ENCODE measurements at regions of chr14 and their contacts with region 1.

Region 1: GRCh38 chr14:77040059-77040740 is 11.7 kb upstream of the IRF2BPL start:
- DNase-seq: peak; percentile 97 to 99 (median 97)
- H3K4me3 ChIP-seq: peak overlapping the region; percentile 31 to 67 (median 38)
- H3K4me3 Mint-ChIP-seq: peak overlapping the region; percentile 73 to 86
- H3K27ac ChIP-seq: peak overlapping the region; percentile 93 to 95
- H3K27ac Mint-ChIP-seq: peak overlapping the region; percentile 94 to 99 (median 99)
- H3K4me1 ChIP-seq: peaks cover 87 to 92% of the 10 kb centered on the region in 2 donors
- H3K4me1 Mint-ChIP-seq: peaks cover 91% of the 10 kb centered on the region
- H3K27me3 ChIP-seq: no peaks in the 10 kb centered on the region
- H3K27me3 Mint-ChIP-seq: peaks cover 0 to 7% (median 0%) of the 10 kb centered on the region in 3 donors
- CTCF ChIP-seq: no peak

Region 2: DNA sequence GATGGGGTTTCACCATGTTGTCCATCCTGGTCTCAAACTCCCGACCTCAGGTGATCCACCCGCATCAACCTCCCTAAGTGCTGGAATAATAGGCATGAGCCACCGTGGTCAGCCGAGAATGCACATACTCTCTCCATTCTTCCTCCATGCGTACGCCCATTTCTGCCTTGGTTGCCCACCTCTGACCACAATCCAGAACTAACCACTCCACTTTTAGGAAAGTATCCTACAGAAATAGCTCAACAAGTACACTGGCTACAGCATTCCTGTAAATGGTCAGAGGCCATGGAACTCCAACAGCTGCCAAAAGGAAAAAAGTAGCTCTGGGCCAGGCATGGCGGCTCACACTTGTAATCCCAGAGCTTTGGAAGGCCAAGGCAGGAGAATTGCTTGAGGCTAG is 72.4 kb before region 1 on chr14:
- intact Hi-C with region 1: no loop called
- DNase-seq: no peak
- H3K4me3 ChIP-seq: no peak overlapping the region
- H3K4me3 Mint-ChIP-seq: no peak overlapping the region
- H3K27ac ChIP-seq: no peak overlapping the region
- H3K27ac Mint-ChIP-seq: peak overlapping the region in 1 of 7 donors; percentile 87
- H3K4me1 ChIP-seq: peaks cover 0 to 1% of the 10 kb centered on the region in 2 donors
- H3K4me1 Mint-ChIP-seq: peaks cover 6% of the 10 kb centered on the region
- H3K27me3 ChIP-seq: no peaks in the 10 kb centered on the region
- H3K27me3 Mint-ChIP-seq: peaks cover 0 to 12% (median 2%) of the 10 kb centered on the region in 3 donors
- CTCF ChIP-seq: no peak

Region 3: GRCh38 chr14:76977793-76978720 is 62.1 kb before region 1 on chr14:
- intact Hi-C with region 1: loop called in 1 of 2 experiments (anchors 5 kb)
- DNase-seq: peak; percentile 98 to 100 (median 100)
- H3K4me3 ChIP-seq: no peak overlapping the region
- H3K4me3 Mint-ChIP-seq: peak overlapping the region; percentile 34 to 73
- H3K27ac ChIP-seq: peak overlapping the region; percentile 75 to 91
- H3K27ac Mint-ChIP-seq: peak overlapping the region; percentile 93 to 97 (median 96)
- H3K4me1 ChIP-seq: peaks cover 17 to 20% of the 10 kb centered on the region in 2 donors
- H3K4me1 Mint-ChIP-seq: peaks cover 19% of the 10 kb centered on the region
- H3K27me3 ChIP-seq: no peaks in the 10 kb centered on the region
- H3K27me3 Mint-ChIP-seq: peaks cover 0 to 8% (median 2%) of the 10 kb centered on the region in 3 donors
- CTCF ChIP-seq: no peak

Region 4: GRCh38 chr14:77028384-77029231 is 11.6 kb before region 1 on chr14 and contains the start of gene IRF2BPL:
- intact Hi-C with region 1: loop called in 1 of 2 experiments (anchors 2 kb)
- DNase-seq: peak; percentile 96 to 98 (median 97)
- H3K4me3 ChIP-seq: peak within 1 kb of the TSS; percentile 68 to 86 (median 85)
- H3K4me3 Mint-ChIP-seq: peak within 1 kb of the TSS; percentile 84 to 90
- H3K27ac ChIP-seq: peak within 1 kb of the TSS; percentile 93 to 96
- H3K27ac Mint-ChIP-seq: peak within 1 kb of the TSS; percentile 89 to 98 (median 95)
- H3K4me1 ChIP-seq: peaks cover 58 to 73% of the 10 kb centered on the region in 2 donors
- H3K4me1 Mint-ChIP-seq: peaks cover 59% of the 10 kb centered on the region
- H3K27me3 ChIP-seq: no peaks in the 10 kb centered on the region
- H3K27me3 Mint-ChIP-seq: peaks cover 0 to 1% (median 0%) of the 10 kb centered on the region in 3 donors
- CTCF ChIP-seq: no peak
- polyA plus RNA-seq, gene IRF2BPL: 1.4 to 17.9 (median 1.9) TPM

Region 5: GRCh38 chr14:77260631-77261030 is 220.4 kb after region 1 on chr14:
- intact Hi-C with region 1: no loop called
- DNase-seq: peak in 1 of 3 donors; percentile 10
- H3K4me3 ChIP-seq: no peak overlapping the region
- H3K4me3 Mint-ChIP-seq: no peak overlapping the region
- H3K27ac ChIP-seq: no peak overlapping the region
- H3K27ac Mint-ChIP-seq: no peak overlapping the region
- H3K4me1 ChIP-seq: no peaks in the 10 kb centered on the region
- H3K4me1 Mint-ChIP-seq: peaks cover 2% of the 10 kb centered on the region
- H3K27me3 ChIP-seq: no peaks in the 10 kb centered on the region
- H3K27me3 Mint-ChIP-seq: peaks cover 2 to 23% (median 10%) of the 10 kb centered on the region in 3 donors
- CTCF ChIP-seq: no peak

Region 6: GRCh38 chr14:77400219-77400618 is 360.0 kb after region 1 on chr14:
- intact Hi-C with region 1: no loop called
- DNase-seq: no peak
- H3K4me3 ChIP-seq: no peak overlapping the region
- H3K4me3 Mint-ChIP-seq: no peak overlapping the region
- H3K27ac ChIP-seq: no peak overlapping the region
- H3K27ac Mint-ChIP-seq: no peak overlapping the region
- H3K4me1 ChIP-seq: no peaks in the 10 kb centered on the region
- H3K4me1 Mint-ChIP-seq: no peaks in the 10 kb centered on the region
- H3K27me3 ChIP-seq: no peaks in the 10 kb centered on the region
- H3K27me3 Mint-ChIP-seq: peaks cover 0 to 4% (median 0%) of the 10 kb centered on the region in 3 donors
- CTCF ChIP-seq: no peak

Measured in CD14-positive monocyte (primary cell).